Posterior cingulate gyrus (tissue), 11 donors: ENCODE measurements at regions of chr6 and their contacts with region 1.

Region 1: GRCh38 chr6:97215157-97215769 is 67.8 kb downstream of the MMS22L start:
- DNase-seq: peak in 9 of 10 donors; percentile 40 to 92 (median 53)

Region 2: DNA sequence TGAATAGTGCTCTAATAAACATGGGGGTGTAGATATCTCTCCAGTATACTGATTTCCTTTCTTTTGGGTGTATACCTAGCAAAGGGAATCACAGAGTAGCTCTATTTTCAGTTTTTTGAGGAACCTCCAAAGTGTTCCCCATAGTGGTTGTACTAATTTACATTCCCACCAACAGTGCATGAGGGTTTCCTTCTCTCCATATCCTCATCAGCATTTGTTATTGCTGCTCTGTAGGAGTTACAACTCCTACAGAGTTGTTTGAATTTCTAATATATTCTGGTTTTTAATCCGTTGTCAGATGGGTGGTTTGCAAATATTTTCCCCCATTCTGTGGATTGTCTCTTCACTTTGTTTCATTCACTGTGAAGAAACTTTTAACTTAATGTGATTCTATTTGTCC is 991.6 kb before region 1 on chr6:
- intact Hi-C with region 1: no loop called
- DNase-seq: no peak

Region 3: DNA sequence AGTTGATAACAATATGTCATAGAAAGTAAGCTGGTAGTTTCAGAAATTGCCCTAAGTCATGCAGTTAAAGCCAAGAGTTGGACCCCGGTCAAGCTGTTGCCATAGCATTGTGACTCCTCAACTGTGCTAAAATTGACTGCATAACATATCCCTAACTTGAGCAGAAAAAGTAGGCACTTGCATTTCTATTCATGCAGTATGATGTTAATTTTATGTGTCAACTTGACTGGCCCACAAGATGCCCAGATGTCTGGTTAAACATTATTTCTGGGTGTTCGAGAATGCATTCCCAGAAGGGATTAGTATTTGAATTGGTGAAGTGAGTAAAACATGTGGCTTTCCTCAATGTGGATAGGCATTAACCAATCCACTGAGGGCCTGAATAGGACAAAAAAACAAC is 514.3 kb before region 1 on chr6:
- intact Hi-C with region 1: no loop called
- DNase-seq: no peak

Region 4: GRCh38 chr6:96975852-96976251 is 239.4 kb before region 1 on chr6:
- intact Hi-C with region 1: no loop called
- DNase-seq: peak in 4 of 10 donors; percentile 7 to 67 (median 23)

Region 5: GRCh38 chr6:97394160-97394748 is 179.0 kb after region 1 on chr6:
- intact Hi-C with region 1: loop called (anchors 10 kb)
- DNase-seq: peak in 2 of 10 donors; percentile 18 to 40

Region 6: DNA sequence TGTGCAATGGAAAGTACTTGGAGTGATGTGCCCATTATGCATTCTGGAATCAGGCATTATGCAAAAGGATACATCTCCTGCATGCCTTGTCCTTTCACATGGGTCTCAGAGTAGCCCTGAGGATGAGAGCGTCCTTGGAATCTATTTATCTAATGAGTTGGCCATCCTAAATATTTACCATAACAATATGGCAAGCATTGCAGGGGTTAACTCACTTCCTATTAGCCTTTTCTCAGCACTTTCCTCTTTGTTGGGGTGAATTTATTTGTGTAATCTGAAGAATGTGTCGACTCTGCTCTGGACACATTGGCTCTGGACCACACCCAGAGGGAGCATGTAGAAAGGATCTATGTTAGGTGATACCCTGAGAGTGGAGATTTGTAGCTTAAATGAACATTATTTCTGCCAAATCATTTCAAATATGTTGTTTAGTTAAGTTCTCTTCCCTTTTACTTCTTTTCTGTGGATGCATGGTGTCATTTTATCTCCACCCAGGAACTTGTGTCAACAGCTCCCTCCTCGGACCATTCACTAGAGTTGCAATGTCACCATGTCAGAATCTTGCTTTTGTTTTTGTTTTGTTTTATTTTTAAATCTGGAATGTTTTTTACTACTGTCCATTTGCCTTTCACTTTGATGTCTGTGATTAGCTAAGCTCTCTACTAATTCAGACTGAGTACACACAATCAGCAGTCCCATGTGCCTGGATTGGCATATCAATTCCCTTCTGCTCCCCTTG is 824.8 kb after region 1 on chr6:
- intact Hi-C with region 1: loop called (anchors 10 kb)
- DNase-seq: no peak